AG04449 (cell line): ENCODE measurements at regions of chr9 and their contacts with region 1.

Region 1: DNA sequence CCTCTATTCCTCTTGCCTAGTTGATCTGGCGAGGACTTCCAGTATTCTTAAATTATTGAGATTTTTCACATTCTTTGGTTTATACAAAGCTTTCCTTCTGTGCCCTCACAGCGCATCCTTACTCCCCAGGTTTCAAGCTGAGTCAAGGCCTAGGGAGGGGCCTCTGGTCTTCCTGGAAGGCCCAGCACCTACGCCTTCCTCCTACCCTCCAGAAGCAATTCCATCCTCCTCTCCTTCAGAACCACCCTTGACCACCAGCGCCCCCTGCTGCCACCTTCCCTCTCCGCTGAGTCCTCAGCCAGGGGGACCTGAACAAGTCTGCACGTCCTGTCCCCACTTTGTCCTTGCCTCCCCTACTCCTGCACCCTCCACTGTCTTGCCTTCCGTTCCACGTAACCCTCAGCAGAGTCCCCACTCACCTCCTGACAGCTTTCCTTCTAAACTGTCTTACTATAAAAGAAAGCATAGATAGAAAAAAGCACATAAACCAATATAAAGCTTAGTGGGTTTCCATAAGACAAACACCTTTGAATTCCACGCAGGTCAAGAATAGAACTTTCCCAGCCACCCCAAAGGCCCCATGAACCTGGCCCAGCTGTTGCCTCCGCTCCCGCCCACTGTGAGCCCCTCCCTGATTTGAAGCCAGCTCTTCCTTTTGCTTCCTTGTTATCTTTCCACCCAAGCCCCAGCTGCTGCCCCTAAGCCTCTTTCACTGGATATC is 63.0 kb upstream of the CTSL start:
- DNase-seq: no peak
- H3K4me3 ChIP-seq: no peak overlapping the region
- CTCF ChIP-seq: peak; percentile 93

Region 2: DNA sequence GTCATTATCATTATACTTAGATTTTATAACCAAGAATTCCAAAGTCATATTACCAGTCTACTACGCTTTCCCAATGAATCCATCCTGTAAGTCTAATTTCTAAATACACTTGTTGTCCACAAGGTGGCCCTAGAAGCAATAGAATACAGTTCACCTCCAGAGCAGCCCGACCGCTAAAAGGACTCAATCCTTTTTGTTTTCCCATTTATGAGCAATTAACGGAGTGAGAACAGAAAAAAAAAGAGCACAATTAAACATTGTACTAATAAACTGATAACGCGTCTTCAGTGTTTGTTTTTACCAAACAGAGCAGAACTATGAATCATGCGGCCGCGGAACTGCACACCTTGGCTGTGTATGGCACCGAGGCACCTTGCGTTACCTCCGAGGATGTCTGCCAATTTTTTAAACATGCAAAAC is 326.0 kb before region 1 on chr9:
- CTCF ChIA-PET with region 1: interaction called, 98 read pairs
- POLR2A ChIA-PET with region 1: no interaction called
- DNase-seq: peak; percentile 51
- H3K4me3 ChIP-seq: peak overlapping the region; percentile 51
- CTCF ChIP-seq: peak; percentile 46

Region 3: GRCh38 chr9:87342743-87343142 is 320.2 kb before region 1 on chr9:
- CTCF ChIA-PET with region 1: interaction called, 98 read pairs
- POLR2A ChIA-PET with region 1: no interaction called
- DNase-seq: no peak
- H3K4me3 ChIP-seq: no peak overlapping the region
- CTCF ChIP-seq: no peak

Region 4: GRCh38 chr9:87518702-87519335 is 144.1 kb before region 1 on chr9:
- CTCF ChIA-PET with region 1: no interaction called
- POLR2A ChIA-PET with region 1: no interaction called
- DNase-seq: no peak
- H3K4me3 ChIP-seq: no peak overlapping the region
- CTCF ChIP-seq: no peak